Activated CD4-positive, alpha-beta T cell treated with anti-CD3 and anti-CD28 coated beads for 36 hours (primary cell): ENCODE measurements at regions of chr1 and their contacts with region 1.

Region 1: DNA sequence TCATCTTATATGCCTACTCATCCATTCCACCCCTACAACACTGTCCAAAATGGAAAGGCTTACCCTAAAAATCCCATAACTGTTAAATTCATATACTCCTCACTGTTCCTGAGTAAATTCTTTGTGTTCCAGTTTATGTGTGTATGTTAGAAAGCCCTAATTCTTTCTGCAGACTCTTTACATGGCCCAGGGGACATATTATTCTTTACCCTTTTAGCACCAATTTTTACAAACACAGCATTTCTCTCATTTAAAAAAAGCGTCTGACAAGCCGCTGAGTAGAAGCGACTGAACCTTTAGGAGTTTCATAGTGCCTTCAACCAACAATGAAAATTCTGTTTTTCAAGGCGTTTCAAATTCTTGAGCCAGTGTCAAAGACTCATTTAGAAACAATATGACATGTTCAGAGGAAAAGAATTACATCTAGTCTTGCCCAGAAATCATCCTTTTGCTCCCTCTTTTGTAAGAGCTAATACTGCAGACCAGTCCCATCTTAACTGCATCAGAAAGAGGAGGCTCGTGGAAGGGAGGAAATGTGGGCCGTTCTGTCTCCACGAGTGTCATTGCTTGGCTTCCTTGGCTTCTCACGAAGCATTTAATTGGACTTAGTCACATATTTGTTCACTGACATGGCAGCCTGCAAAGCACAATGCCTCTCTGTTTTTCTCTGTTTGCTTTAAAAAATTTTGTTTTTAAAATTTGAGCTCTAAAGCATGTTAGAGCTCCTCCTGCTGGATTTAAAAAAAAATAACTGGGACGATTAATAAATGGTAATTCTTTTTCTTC is 21.3 kb upstream of the C1orf105 start:
- DNase-seq: peak; percentile 35
- ATAC-seq: peak; percentile 53
- H3K4me3 Mint-ChIP-seq: peak overlapping the region; percentile 29
- H3K27ac Mint-ChIP-seq: peak overlapping the region; percentile 70
- H3K4me1 Mint-ChIP-seq: peaks cover 74% of the 10 kb centered on the region
- H3K27me3 Mint-ChIP-seq: no peaks in the 10 kb centered on the region

Region 2: GRCh38 chr1:172089768-172090510 is 309.2 kb before region 1 on chr1:
- CTCF ChIA-PET with region 1: interaction called, 15 read pairs
- POLR2A ChIA-PET with region 1: no interaction called
- intact Hi-C with region 1: loop called (anchors 1 kb)
- DNase-seq: peak; percentile 83
- ATAC-seq: peak; percentile 93
- H3K4me3 Mint-ChIP-seq: no peak overlapping the region
- H3K27ac Mint-ChIP-seq: no peak overlapping the region
- H3K4me1 Mint-ChIP-seq: peaks cover 2% of the 10 kb centered on the region
- H3K27me3 Mint-ChIP-seq: no peaks in the 10 kb centered on the region

Region 3: GRCh38 chr1:172180501-172181285 is 218.5 kb before region 1 on chr1:
- CTCF ChIA-PET with region 1: interaction called, 3 read pairs
- POLR2A ChIA-PET with region 1: no interaction called
- intact Hi-C with region 1: loop called (anchors 1 to 2 kb)
- DNase-seq: peak; percentile 69
- ATAC-seq: peak; percentile 89
- H3K4me3 Mint-ChIP-seq: peak overlapping the region; percentile 66
- H3K27ac Mint-ChIP-seq: peak overlapping the region; percentile 95
- H3K4me1 Mint-ChIP-seq: peaks cover 42% of the 10 kb centered on the region
- H3K27me3 Mint-ChIP-seq: no peaks in the 10 kb centered on the region

Region 4: GRCh38 chr1:172351761-172352161 is 47.4 kb before region 1 on chr1:
- CTCF ChIA-PET with region 1: interaction called, 11 read pairs
- POLR2A ChIA-PET with region 1: no interaction called
- intact Hi-C with region 1: no loop called
- DNase-seq: no peak
- ATAC-seq: no peak
- H3K4me3 Mint-ChIP-seq: no peak overlapping the region
- H3K27ac Mint-ChIP-seq: no peak overlapping the region
- H3K4me1 Mint-ChIP-seq: peaks cover 35% of the 10 kb centered on the region
- H3K27me3 Mint-ChIP-seq: peaks cover 3% of the 10 kb centered on the region

Region 5: DNA sequence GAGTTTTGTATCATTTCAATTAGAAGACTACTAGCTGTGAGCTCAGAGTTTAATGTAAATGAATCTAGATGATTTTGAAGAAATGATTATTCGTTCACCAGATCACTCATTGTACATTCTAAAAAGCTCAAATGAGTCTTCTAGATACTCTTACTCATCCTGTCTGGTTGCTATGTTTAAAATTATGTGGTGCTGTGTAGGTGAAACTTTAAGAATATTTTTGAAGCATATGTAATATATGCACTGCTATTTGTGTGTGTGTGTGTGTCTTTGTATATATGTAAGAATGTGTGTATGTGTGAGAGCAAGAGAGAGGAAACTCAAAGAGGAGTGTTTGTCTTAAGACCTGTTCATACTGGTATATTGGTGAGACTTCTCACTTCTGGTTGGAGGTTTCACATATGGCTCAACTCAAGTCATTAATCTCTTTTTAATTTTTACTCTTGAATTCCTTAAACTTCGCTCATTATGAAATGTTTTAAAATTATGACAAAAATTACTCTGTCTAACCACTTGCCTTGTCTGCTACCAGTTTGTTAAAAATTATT is 12.7 kb after region 1 on chr1:
- CTCF ChIA-PET with region 1: interaction called, 14 read pairs
- POLR2A ChIA-PET with region 1: no interaction called
- intact Hi-C with region 1: no loop called
- DNase-seq: no peak
- ATAC-seq: peak; percentile 92
- H3K4me3 Mint-ChIP-seq: no peak overlapping the region
- H3K27ac Mint-ChIP-seq: no peak overlapping the region
- H3K4me1 Mint-ChIP-seq: peaks cover 10% of the 10 kb centered on the region
- H3K27me3 Mint-ChIP-seq: no peaks in the 10 kb centered on the region

Region 6: DNA sequence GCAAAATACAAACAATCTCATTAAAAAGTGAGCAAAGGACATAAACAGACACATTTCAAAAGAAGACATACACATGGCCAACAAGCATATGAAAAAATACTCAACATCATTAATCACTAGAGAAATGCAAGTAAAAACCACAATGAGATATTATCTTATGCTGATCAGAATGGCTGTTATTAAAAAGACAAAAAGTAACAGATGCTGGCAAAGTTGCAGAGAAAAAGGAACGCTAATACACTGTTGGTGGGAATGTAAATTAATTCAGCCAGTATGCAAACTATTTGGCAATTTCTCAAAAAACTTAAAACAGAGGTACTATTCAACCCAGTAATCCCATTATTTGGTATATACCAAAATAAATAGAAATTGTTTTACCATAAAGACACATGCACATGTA is 683.8 kb after region 1 on chr1:
- CTCF ChIA-PET with region 1: no interaction called
- POLR2A ChIA-PET with region 1: no interaction called
- intact Hi-C with region 1: no loop called
- DNase-seq: no peak
- ATAC-seq: no peak
- H3K4me3 Mint-ChIP-seq: no peak overlapping the region
- H3K27ac Mint-ChIP-seq: no peak overlapping the region
- H3K4me1 Mint-ChIP-seq: no peaks in the 10 kb centered on the region
- H3K27me3 Mint-ChIP-seq: peaks cover 3% of the 10 kb centered on the region